ENCODE measurements at regions of chr19 and their contacts with region 1.

Region 1: DNA sequence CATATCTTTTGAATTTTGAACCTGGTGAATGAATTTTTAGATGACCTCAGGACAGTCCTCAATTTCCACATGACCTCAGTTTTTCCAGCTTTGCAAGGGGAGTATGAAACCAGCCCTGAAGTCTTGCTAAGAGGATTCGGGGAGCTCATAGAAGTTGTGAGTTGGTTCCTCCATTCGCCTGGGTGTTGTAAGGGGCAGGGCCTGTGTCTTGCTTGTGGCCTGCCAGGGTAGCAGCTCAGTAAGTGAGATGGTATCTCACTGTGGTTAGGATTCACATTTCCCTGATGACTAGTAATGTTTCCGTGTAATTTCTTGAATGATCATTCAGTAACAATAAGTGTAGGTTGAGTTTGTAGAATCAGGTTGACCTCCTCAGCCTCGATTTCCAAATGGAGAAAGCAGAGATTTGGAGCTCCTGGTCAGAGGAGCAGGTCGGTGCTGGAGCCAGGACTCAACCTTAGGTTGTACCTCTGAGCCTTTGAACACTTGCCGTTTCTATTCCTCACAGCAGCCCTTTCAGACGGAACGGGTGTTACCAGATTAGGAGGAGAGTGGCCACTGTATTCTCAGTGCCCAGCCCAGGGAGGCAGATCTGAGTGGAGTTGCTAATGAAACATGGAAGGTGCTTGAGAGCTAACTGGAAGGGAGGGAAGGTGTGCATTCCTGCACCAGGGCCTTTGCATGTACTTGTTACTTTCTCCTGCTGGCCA is 14.6 kb downstream of the NACC1 start:
- DNase-seq: peak; percentile 83
- H3K4me3 Mint-ChIP-seq: peak overlapping the region; percentile 60
- H3K27ac Mint-ChIP-seq: peak overlapping the region; percentile 96
- H3K4me1 Mint-ChIP-seq: peaks cover 46% of the 10 kb centered on the region
- H3K27me3 Mint-ChIP-seq: no peaks in the 10 kb centered on the region

Region 2: DNA sequence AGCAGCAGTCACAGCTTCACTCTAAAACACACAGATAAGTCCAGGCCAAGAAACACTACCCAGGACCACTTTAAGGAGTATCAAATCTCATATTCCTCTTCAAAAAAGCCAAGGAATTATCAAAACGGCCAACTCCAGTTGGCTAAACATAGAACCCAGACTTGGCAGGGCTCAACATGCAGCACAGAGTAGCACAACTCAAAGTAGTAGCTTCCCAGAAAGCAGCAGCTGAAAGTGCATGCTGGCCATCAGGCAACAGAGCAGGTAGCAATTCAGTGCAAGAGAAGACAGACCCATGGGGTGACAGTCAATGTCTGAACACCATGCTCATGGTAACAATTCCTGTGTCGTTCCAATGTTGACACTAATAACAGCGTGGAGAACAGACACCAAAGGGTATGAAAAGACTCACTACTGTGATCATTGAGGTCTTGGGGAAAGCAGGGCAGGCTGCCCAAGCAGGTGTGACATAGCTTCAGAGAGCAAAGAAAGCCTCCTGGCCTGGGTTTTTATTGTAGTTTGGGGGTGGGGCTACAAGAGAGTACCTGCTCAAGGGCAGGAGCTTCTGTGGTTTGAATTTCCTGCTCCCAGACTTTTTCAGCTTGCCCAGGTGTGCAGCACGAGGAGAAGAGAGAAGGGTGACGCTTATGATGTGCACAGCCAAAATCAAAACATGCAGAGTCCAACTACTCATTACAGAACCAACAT is 654.2 kb before region 1 on chr19:
- CTCF ChIA-PET with region 1: no interaction called
- POLR2A ChIA-PET with region 1: no interaction called
- intact Hi-C with region 1: no loop called
- DNase-seq: no peak
- H3K4me3 Mint-ChIP-seq: no peak overlapping the region
- H3K27ac Mint-ChIP-seq: no peak overlapping the region
- H3K4me1 Mint-ChIP-seq: peaks cover 29% of the 10 kb centered on the region
- H3K27me3 Mint-ChIP-seq: no peaks in the 10 kb centered on the region

Region 3: DNA sequence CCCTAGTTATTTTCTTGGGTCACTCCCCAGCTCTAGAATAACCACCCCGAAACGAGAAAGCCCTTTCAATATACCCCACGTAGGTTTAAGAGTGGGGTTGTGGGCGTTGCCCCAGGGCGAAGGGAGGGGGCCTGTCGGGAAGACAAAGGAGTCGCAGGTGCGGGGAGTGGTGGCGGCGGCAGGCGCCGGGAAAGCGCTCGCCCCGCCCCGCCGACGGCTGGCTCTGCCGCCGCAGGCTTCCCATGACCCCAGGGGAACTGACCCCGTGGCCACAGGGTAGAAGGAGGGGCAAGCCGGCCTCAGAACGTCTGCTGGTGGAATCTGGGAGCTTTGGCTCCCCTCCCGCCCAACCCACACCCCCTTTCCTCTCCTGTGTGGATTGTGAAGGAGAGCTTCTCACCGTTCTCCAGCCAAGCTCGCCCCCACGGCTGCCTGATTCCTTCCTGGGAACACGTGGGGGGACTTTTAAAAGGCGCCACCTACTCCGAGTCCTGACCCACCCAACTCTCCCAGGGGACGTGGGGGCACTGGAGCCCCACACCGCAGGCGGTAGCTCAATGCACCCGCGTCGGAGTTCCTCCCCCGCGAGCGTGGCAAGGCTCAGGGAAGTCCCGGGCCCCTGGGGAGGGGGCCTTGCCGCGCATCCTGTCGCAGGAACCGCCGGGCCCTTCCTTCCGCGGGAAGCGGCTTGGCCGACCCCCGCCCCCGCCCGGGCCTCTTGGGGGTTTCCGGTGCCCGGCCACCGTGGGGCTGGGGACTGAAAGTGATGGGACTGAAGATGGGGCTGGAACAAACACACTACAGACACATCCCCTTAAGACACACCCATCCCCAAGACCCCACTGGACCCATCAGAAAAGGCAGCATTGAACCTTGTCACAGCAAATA is 23.1 kb after region 1 on chr19:
- CTCF ChIA-PET with region 1: interaction called, 11 read pairs
- POLR2A ChIA-PET with region 1: interaction called, 20 read pairs
- intact Hi-C with region 1: loop called (anchors 1 kb)
- DNase-seq: peak; percentile 84
- H3K4me3 Mint-ChIP-seq: peak overlapping the region; percentile 99
- H3K27ac Mint-ChIP-seq: peak overlapping the region; percentile 97
- H3K4me1 Mint-ChIP-seq: peaks cover 41% of the 10 kb centered on the region
- H3K27me3 Mint-ChIP-seq: peaks cover 3% of the 10 kb centered on the region